ENCODE measurements at regions of chr15 and their contacts with region 1.

Region 1: GRCh38 chr15:35519541-35520149 is 26.3 kb downstream of the DPH6 start:
- DNase-seq: peak; percentile 64
- H3K4me3 Mint-ChIP-seq: no peak overlapping the region
- H3K27ac Mint-ChIP-seq: no peak overlapping the region
- H3K4me1 Mint-ChIP-seq: peaks cover 6% of the 10 kb centered on the region
- H3K27me3 Mint-ChIP-seq: no peaks in the 10 kb centered on the region
- CTCF ChIP-seq: peak; percentile 53

Region 2: GRCh38 chr15:35306361-35306981 is 213.2 kb before region 1 on chr15:
- CTCF ChIA-PET with region 1: no interaction called
- POLR2A ChIA-PET with region 1: no interaction called
- intact Hi-C with region 1: no loop called
- DNase-seq: peak; percentile 53
- H3K4me3 Mint-ChIP-seq: peak overlapping the region; percentile 54
- H3K27ac Mint-ChIP-seq: peak overlapping the region; percentile 96
- H3K4me1 Mint-ChIP-seq: peaks cover 32% of the 10 kb centered on the region
- H3K27me3 Mint-ChIP-seq: no peaks in the 10 kb centered on the region
- CTCF ChIP-seq: no peak

Region 3: DNA sequence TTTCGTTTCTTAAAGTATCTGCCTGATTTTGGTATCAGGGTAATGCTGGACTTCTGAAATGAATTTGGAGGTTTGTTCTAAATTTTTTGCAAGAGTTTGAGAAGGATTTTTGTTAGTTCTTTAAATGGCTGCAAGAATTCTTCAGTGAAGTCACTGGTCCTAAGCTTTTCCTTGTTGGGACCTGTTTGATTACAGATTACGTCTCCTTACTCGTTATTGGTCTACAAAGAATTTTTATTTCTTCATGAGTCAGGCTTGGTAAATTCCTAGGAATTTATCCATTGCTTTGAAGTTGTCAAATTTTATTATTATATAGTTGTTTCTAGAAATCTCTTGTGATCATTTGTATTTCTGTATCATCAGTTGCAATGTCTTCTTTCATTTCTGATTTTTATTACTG is 169.7 kb before region 1 on chr15:
- CTCF ChIA-PET with region 1: no interaction called
- POLR2A ChIA-PET with region 1: no interaction called
- intact Hi-C with region 1: no loop called
- DNase-seq: no peak
- H3K4me3 Mint-ChIP-seq: no peak overlapping the region
- H3K27ac Mint-ChIP-seq: no peak overlapping the region
- H3K4me1 Mint-ChIP-seq: peaks cover 4% of the 10 kb centered on the region
- H3K27me3 Mint-ChIP-seq: no peaks in the 10 kb centered on the region
- CTCF ChIP-seq: no peak

Region 4: DNA sequence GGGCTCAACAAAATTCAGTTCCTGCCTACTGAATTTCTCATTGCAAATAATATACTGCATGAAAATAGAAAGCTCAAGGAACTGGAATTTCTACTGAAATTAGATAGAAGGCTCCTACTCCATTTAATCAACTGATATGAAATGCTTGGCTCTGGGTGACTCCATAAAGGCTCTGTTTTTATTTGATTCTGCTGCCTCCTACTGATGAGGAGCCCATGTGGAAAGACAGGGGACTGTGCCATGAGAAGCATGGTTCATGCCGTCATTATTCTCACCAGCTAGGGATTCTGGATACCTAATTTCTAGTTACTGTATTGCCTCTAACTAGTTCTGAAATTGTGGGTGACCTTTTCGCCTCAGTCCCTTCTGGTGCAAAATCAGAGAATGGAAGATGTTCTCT is 392.6 kb after region 1 on chr15:
- CTCF ChIA-PET with region 1: no interaction called
- POLR2A ChIA-PET with region 1: no interaction called
- intact Hi-C with region 1: loop called (anchors 1 kb)
- DNase-seq: peak; percentile 28
- H3K4me3 Mint-ChIP-seq: no peak overlapping the region
- H3K27ac Mint-ChIP-seq: no peak overlapping the region
- H3K4me1 Mint-ChIP-seq: no peaks in the 10 kb centered on the region
- H3K27me3 Mint-ChIP-seq: no peaks in the 10 kb centered on the region
- CTCF ChIP-seq: peak; percentile 31

Measured in MCF 10A (cell line).